Heart right ventricle (tissue), 16 donors: ENCODE measurements at regions of chr16 and their contacts with region 1.

Region 1: GRCh38 chr16:57013229-57013628 is 23.9 kb downstream of the NLRC5 start:
- DNase-seq: no peak
- ATAC-seq: no peak
- H3K4me3 ChIP-seq: no peak overlapping the region
- H3K27ac ChIP-seq: peak overlapping the region in 7 of 10 donors; percentile 23 to 84 (median 73)
- H3K4me1 ChIP-seq: peaks cover 0 to 46% (median 4%) of the 10 kb centered on the region in 9 donors
- H3K27me3 ChIP-seq: no peaks in the 10 kb centered on the region
- CTCF ChIP-seq: no peak

Region 2: GRCh38 chr16:56964243-56965148 is 48.7 kb before region 1 on chr16:
- intact Hi-C with region 1: loop called in 3 of 10 experiments (anchors 10 kb)
- DNase-seq: peak; percentile 90
- ATAC-seq: peak; percentile 35 to 78 (median 64)
- H3K4me3 ChIP-seq: no peak overlapping the region
- H3K27ac ChIP-seq: peak overlapping the region in 5 of 10 donors; percentile 0 to 71 (median 48)
- H3K4me1 ChIP-seq: peaks cover 16 to 80% (median 45%) of the 10 kb centered on the region in 9 donors
- H3K27me3 ChIP-seq: no peaks in the 10 kb centered on the region
- CTCF ChIP-seq: peak; percentile 81 to 99 (median 94)

Region 3: DNA sequence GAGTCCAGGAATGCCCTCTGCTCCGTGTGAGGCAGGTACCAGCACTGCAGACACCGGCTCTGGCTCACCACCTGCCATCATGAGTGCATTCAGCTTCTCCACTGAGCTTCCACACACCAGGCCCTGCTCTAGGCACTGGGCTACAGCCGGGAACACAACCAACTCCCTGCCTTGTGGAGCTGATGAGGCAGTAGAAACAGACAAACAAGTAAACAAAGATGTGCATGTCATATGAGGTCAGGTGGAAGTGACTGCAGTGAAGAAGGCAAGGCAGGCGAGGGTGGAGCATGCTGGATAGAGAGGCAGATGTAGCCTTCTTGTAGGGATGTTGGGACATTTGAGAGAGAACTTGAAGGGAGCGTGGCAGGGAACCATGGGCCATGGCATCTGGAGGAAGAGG is 18.9 kb before region 1 on chr16:
- intact Hi-C with region 1: loop called in 1 of 10 experiments (anchors 2 kb)
- DNase-seq: no peak
- ATAC-seq: no peak
- H3K4me3 ChIP-seq: no peak overlapping the region
- H3K27ac ChIP-seq: peak overlapping the region in 1 of 10 donors; percentile 37
- H3K4me1 ChIP-seq: peaks cover 4 to 73% (median 47%) of the 10 kb centered on the region in 9 donors
- H3K27me3 ChIP-seq: peaks cover 0 to 3% (median 0%) of the 10 kb centered on the region in 7 donors
- CTCF ChIP-seq: no peak